ENCODE measurements at regions of chr5 and their contacts with region 1.

Region 1: GRCh38 chr5:126354012-126354857 is 69.0 kb upstream of the GRAMD2B start:
- DNase-seq: peak; percentile 59
- CTCF ChIP-seq: peak; percentile 53

Region 2: DNA sequence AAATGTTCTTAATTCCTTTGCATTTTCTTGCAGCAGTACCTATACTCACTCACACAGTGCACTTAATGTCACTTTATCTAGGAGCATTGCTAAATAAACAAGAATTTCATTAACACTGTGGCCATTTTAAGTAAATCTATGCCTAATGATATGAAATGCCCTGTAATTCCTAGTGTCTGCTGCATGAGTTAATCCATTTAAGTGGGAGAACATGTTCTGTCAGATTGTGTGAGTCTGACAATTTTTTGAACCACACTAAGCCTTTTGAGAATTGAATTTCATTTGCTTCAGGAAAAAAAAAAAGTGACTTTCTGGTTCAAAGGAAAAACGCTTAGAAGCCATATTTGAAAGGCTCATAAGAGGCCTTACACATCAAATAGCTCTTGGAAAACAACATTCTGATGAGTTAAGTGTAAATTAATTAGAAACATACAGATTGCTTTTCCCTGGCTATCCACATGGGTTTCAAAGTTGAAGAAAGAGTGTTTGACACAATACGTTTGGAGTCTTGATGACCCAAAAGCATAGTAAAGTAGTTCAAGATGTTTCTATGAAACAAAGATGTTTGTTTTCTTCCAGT is 377.7 kb before region 1 on chr5:
- CTCF ChIA-PET with region 1: no interaction called
- POLR2A ChIA-PET with region 1: no interaction called
- DNase-seq: no peak
- CTCF ChIP-seq: no peak

Region 3: GRCh38 chr5:126339215-126339805 is 14.9 kb before region 1 on chr5:
- CTCF ChIA-PET with region 1: interaction called, 77 read pairs
- POLR2A ChIA-PET with region 1: no interaction called
- DNase-seq: peak; percentile 43
- CTCF ChIP-seq: peak; percentile 84

Region 4: GRCh38 chr5:126370796-126371718 is 16.8 kb after region 1 on chr5:
- CTCF ChIA-PET with region 1: interaction called, 18 read pairs
- POLR2A ChIA-PET with region 1: no interaction called
- DNase-seq: no peak
- CTCF ChIP-seq: no peak

Region 5: GRCh38 chr5:126538579-126538978 is 184.3 kb after region 1 on chr5:
- CTCF ChIA-PET with region 1: interaction called, 57 read pairs
- POLR2A ChIA-PET with region 1: no interaction called
- DNase-seq: no peak
- CTCF ChIP-seq: no peak

Region 6: DNA sequence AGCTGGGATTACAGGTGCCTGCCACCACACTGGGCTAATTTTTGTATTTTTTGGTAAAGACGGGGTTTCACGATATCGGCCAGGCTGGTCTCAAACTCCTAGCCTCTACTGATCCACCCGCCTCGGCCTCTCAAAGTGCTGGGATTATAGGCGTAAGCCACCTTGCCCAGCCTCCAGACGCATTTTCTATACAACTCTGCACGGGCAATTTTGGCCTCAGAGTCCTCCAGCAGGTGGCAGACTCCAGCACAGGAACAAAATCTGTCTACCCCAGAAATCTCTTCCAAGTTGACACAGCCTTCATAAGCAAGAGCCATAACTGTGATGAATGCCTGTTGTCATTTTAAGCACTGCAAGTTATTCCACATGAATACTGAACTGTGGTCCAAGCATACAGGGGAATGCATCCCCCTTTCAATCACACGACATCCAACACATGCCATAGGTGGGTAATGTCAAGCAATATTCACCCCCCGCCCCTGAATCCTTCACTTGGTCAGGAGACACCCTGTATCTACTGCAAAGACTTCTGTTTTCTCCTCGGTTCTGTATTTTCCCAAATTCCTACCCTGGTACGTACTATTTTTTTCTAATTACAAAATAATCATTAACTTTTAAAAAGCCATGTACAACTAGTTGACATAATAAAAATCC is 190.0 kb after region 1 on chr5:
- CTCF ChIA-PET with region 1: interaction called, 57 read pairs
- POLR2A ChIA-PET with region 1: no interaction called
- DNase-seq: peak; percentile 56
- CTCF ChIP-seq: peak; percentile 68

Region 7: DNA sequence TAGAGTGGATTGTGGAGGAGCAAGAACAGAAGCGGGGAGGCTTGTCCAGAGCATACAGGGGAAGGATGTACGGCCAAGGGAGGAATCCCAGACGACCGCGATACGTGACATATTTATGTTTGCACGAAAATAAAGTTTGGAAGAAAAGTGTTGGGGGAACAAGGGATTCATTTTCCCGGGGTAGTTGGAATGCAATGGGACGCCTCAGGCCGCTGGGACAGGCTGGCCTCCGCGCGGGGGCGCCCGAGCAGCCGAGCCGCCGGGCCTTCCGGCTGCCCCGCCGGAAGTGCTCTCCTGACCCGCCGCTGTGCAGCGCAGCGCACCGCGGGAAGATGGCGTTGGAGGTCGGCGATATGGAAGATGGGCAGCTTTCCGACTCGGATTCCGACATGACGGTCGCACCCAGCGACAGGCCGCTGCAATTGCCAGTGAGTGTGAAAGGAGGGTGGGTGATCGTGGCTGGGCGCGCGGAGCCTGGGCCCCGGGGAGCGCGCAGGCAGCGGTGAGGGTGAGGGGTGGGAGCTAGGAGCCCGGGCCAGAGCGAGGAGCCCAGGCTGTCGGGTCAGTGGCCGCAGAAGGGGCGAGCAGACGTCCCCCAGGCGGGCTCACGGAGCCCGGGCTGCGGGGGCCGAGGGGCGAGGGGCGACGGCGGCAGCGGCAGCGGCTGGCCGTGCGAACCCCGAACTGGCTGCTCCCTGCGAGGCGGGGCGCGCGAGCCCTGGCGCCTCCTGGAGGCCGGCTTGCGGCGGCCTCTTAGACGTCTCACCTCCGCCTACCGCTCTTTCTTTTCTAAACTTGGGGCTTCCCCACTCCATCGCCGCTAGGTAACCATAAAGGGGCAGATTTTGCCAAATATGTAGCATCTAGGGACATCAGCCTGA is 246.6 kb after region 1 on chr5 and contains the start of gene PHAX:
- CTCF ChIA-PET with region 1: interaction called, 13 read pairs
- POLR2A ChIA-PET with region 1: no interaction called
- DNase-seq: peak; percentile 91
- CTCF ChIP-seq: peak; percentile 84

Measured in GM10248 (cell line).